ENCODE measurements at regions of chr5 and their contacts with region 1.

Region 1: DNA sequence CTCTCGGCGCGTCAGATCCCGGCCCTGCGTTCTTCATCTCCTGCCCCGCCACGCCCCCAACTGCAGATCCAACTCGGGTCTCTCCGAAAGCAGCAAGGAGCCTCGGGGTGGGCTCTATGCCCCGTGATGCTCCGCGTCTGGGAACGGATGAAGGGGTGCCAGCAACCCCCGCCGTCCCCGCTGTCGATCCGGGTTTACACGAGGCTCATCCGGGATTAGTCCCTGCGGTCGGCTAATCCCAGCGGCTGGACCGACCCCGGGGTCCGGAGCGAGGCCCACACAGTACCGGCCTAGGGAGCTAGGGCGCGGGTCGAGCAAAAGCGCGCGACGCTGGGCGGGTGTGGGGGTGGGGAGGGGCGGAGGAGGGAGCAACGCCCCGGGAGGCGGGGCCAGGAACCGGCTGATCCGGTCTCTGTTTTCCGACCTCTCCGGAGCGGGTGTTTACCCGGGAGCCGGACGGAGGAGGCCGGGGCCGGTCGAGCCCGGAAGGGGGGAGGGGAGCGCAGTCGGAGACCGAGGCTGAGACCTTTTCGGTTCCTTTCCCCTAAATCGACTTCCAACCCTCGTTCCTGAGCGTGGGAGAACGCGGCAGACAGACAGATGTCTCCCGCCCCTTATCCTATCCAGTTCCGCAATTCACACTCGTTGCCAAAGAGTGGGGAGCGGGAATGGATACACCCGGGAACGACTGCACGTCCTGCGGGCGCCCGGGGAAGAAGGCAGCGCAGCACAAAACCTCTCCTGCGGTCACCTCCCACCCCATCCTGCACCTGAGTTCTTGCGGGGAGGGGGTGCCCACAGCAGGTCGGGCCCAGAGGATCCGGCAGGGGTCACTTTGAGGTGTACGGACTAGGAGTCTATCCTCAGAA is 28.6 kb downstream of the PCDH1 start:
- DNase-seq: peak; percentile 69
- H3K4me3 Mint-ChIP-seq: peak overlapping the region; percentile 86
- H3K27ac Mint-ChIP-seq: peak overlapping the region; percentile 86
- H3K4me1 Mint-ChIP-seq: peaks cover 20% of the 10 kb centered on the region
- H3K27me3 Mint-ChIP-seq: peaks cover 7% of the 10 kb centered on the region

Region 2: DNA sequence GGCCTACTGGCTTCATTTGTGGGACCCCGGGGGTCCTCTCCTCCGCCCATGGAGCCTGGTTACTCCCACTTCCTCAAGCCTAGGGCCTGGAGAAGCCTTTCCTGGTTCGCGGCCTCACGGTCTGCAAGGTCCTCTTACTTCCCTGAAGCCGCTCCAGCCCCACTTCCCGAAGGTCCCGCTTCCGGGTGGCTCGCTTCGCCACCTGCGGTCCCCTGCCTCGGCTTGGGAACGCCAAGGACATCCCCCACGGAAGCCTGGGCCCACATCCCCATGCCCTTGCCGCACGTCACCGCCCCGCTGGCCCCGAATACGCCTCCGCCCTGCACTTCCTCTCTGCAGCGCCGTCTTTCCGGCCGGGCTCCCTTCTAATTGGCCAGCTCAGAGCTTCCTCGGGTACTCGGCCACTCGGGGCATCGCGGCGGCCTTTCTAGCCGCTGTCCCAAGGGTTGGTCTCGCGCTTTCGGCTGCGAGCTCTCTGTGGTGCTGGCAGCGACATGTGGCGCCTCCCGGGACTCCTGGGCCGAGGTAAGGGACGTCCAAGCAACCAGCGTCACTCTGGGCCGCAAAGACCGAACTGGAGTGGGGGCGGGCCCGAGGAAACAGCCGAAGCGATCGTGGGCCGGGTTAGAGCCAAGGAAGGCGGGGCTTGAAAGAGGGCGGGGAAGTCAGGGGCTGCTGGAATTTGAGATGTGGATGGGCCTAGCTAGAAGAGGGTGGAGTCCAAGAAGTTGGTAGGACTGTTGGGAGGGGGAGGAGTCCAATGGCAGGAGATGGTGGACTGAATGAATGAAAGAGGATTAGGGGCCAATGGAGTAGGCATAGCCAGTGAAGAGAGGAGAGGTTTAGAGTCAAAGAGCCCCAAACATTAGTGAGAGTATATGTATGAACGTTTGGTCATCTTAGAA is 74.1 kb after region 1 on chr5 and contains the start of gene DELE1:
- intact Hi-C with region 1: loop called (anchors 1 kb)
- DNase-seq: peak; percentile 88
- H3K4me3 Mint-ChIP-seq: peak within 1 kb of the TSS; percentile 92
- H3K27ac Mint-ChIP-seq: peak within 1 kb of the TSS; percentile 96
- H3K4me1 Mint-ChIP-seq: peaks cover 32% of the 10 kb centered on the region
- H3K27me3 Mint-ChIP-seq: no peaks in the 10 kb centered on the region
- total RNA-seq, gene DELE1: 68.4 and 81.5 TPM in 2 replicates

Region 3: GRCh38 chr5:141960449-141961202 is 111.0 kb after region 1 on chr5:
- intact Hi-C with region 1: loop called (anchors 2 kb)
- DNase-seq: peak; percentile 82
- H3K4me3 Mint-ChIP-seq: peak overlapping the region; percentile 24
- H3K27ac Mint-ChIP-seq: peak overlapping the region; percentile 76
- H3K4me1 Mint-ChIP-seq: peaks cover 42% of the 10 kb centered on the region
- H3K27me3 Mint-ChIP-seq: no peaks in the 10 kb centered on the region

Region 4: GRCh38 chr5:141968914-141969608 is 119.5 kb after region 1 on chr5 and contains the start of gene RNF14:
- intact Hi-C with region 1: loop called (anchors 2 kb)
- DNase-seq: peak; percentile 95
- H3K4me3 Mint-ChIP-seq: peak within 1 kb of the TSS; percentile 92
- H3K27ac Mint-ChIP-seq: peak within 1 kb of the TSS; percentile 93
- H3K4me1 Mint-ChIP-seq: peaks cover 26% of the 10 kb centered on the region
- H3K27me3 Mint-ChIP-seq: no peaks in the 10 kb centered on the region
- total RNA-seq, gene RNF14: 26.4 and 28.7 TPM in 2 replicates